Transverse colon (tissue), 4 donors: ENCODE measurements at regions of chr19 and their contacts with region 1.

Region 1: GRCh38 chr19:925526-926322 is at the start of gene ARID3A:
- DNase-seq: peak; percentile 80
- H3K4me3 ChIP-seq: peak within 1 kb of the TSS; percentile 85 to 99 (median 88)
- H3K27ac ChIP-seq: peak within 1 kb of the TSS; percentile 89 to 92 (median 91)
- H3K4me1 ChIP-seq: peaks cover 0 to 30% (median 23%) of the 10 kb centered on the region in 4 donors
- H3K27me3 ChIP-seq: peaks cover 8% of the 10 kb centered on the region
- CTCF ChIP-seq: no peak
- EP300 ChIP-seq: no peak
- POLR2A ChIP-seq: no peak
- total RNA-seq, gene ARID3A: 2.2 to 8.7 (median 4.3) TPM

Region 2: DNA sequence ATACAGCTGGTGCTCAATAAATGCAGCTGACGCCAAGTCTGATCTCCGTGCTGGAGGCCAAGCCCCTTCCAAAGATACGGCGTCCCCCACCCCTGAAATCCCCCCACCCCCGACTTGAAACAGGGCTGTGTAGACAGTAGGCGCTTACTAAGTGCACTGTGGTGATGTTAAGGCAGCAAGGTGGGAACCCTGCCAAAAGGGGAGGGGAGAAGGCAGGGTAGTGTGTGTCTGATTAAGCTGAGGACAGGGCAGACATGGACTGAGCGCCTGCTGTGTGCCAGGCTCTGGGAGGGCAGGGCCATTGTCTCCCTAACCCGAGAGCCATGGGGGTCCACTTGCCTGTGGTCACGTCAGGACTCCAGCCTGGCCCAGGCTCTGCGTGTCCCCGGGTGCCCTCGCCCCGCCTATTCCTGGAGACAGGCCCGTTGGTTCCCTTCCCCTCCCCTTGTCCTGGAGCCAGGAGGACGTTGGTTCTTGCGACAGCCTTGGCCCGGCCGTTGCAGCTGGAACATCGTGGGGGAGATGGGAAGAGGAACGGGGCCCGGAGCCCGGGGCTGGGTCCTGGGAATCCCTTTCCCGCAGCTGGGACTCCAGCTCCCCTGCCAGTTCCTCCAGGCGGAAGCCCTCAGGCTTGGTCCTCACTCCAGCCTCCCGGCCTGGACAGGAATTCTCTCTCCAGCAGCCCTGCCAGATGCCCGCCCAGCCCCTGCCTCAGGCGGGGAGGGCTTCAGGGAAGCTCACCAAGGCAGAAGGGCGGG is 75.3 kb before region 1 on chr19:
- in situ Hi-C with region 1: loop called in 3 of 4 experiments (anchors 5 to 10 kb)
- intact Hi-C with region 1: no loop called
- DNase-seq: peak; percentile 82
- H3K4me3 ChIP-seq: no peak overlapping the region
- H3K27ac ChIP-seq: peak overlapping the region; percentile 62 to 87 (median 78)
- H3K4me1 ChIP-seq: peaks cover 0 to 13% (median 3%) of the 10 kb centered on the region in 4 donors
- H3K27me3 ChIP-seq: peaks cover 78% of the 10 kb centered on the region
- CTCF ChIP-seq: no peak
- EP300 ChIP-seq: peak; percentile 89
- POLR2A ChIP-seq: no peak

Region 3: DNA sequence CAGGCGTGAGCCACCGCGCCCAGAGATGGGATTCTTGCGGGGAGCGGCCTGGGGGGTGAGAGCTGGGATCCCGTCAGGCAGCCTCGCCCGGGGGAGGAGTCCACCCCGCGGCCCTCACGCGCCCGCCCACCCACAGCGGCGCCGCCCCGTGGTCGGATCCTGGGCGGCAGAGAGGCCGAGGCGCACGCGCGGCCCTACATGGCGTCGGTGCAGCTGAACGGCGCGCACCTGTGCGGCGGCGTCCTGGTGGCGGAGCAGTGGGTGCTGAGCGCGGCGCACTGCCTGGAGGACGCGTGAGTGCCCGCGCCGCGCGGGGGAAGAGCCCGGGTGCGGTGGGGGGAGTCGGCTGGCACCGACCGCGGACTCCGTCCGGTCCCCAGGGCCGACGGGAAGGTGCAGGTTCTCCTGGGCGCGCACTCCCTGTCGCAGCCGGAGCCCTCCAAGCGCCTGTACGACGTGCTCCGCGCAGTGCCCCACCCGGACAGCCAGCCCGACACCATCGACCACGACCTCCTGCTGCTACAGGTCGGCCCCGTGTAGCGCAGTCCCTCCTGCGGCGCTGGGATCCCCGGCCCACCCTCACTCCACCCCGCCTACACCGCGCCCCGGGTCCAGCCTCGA is 65.1 kb before region 1 on chr19:
- in situ Hi-C with region 1: loop called in 3 of 4 experiments (anchors 5 to 10 kb)
- intact Hi-C with region 1: no loop called
- DNase-seq: peak; percentile 84
- H3K4me3 ChIP-seq: peak overlapping the region; percentile 9 to 45 (median 35)
- H3K27ac ChIP-seq: peak overlapping the region; percentile 62 to 75 (median 70)
- H3K4me1 ChIP-seq: peaks cover 6 to 46% (median 41%) of the 10 kb centered on the region in 4 donors
- H3K27me3 ChIP-seq: peaks cover 37% of the 10 kb centered on the region
- CTCF ChIP-seq: peak in 2 of 5 experiments; percentile 17 to 31
- EP300 ChIP-seq: no peak
- POLR2A ChIP-seq: peak; percentile 12

Region 4: DNA sequence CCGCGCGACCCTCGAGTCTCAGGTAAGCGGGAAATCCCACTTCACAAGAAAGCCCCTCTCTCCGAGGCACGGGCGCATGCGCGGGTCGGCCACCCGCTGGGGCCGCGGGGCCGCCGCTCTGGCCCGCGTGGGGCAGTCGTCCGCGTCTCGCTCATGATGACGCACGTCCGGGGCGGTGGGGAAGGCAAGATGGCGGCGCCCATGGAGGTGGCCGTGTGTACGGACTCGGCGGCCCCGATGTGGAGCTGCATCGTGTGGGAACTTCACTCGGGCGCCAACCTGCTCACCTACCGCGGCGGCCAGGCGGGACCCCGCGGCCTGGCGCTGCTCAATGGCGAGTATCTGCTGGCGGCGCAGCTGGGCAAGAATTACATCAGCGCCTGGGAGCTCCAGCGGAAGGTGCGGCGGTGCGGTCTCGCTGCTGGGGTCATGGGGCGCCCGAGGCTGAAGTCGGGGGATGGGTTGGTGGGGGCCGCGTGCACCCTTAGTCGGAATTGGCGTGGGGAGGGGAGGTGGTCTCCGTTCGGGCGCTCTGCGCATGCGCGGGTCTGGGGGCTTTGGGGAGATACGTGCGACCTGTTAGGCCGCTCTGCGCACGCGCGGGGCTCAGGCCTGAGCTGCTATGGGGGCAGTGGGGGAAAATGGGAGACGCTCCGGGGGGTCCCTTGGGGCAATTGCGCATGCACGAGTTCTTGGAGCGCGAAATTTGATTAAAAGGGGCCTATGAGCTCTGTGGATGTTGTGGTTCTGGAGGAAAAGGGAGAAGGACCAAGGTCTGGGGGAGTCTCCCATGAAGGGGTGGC is 58.6 kb after region 1 on chr19 and contains the start of gene WDR18:
- in situ Hi-C with region 1: loop called (anchors 5 to 10 kb)
- intact Hi-C with region 1: loop called (anchors 1 kb)
- DNase-seq: peak; percentile 94
- H3K4me3 ChIP-seq: peak within 1 kb of the TSS; percentile 69 to 100 (median 76)
- H3K27ac ChIP-seq: peak within 1 kb of the TSS; percentile 83 to 94 (median 88)
- H3K4me1 ChIP-seq: peaks cover 11 to 27% (median 22%) of the 10 kb centered on the region in 4 donors
- H3K27me3 ChIP-seq: peaks cover 2% of the 10 kb centered on the region
- CTCF ChIP-seq: peak; percentile 23 to 44 (median 35)
- EP300 ChIP-seq: no peak
- POLR2A ChIP-seq: peak; percentile 56
- total RNA-seq, gene WDR18: 23.1 to 47.4 (median 39.0) TPM

Region 5: GRCh38 chr19:1103708-1104310 is 178.1 kb after region 1 on chr19 and contains the start of gene GPX4:
- in situ Hi-C with region 1: no loop called
- intact Hi-C with region 1: loop called (anchors 10 kb)
- DNase-seq: peak; percentile 100
- H3K4me3 ChIP-seq: peak within 1 kb of the TSS; percentile 52 to 98 (median 91)
- H3K27ac ChIP-seq: peak within 1 kb of the TSS; percentile 98 to 100 (median 100)
- H3K4me1 ChIP-seq: peaks cover 23 to 62% (median 40%) of the 10 kb centered on the region in 4 donors
- H3K27me3 ChIP-seq: no peaks in the 10 kb centered on the region
- CTCF ChIP-seq: peak in 1 of 5 experiments; percentile 19
- EP300 ChIP-seq: no peak
- POLR2A ChIP-seq: peak; percentile 98
- total RNA-seq, gene GPX4: 115 to 426 (median 261) TPM